Natural killer cell (primary cell): ENCODE measurements at regions of chr20 and their contacts with region 1.

Region 1: GRCh38 chr20:17504898-17505635 is 26.1 kb downstream of the BFSP1 start:
- DNase-seq: peak; percentile 63 to 82
- ATAC-seq: peak; percentile 64 to 83 (median 78)
- H3K4me3 ChIP-seq: peak overlapping the region; percentile 43
- H3K4me3 Mint-ChIP-seq: peak overlapping the region; percentile 90
- H3K27ac ChIP-seq: peak overlapping the region; percentile 74
- H3K27ac Mint-ChIP-seq: peak overlapping the region; percentile 85 to 93
- H3K4me1 ChIP-seq: peaks cover 48% of the 10 kb centered on the region
- H3K4me1 Mint-ChIP-seq: peaks cover 55 to 56% of the 10 kb centered on the region in 2 donors
- H3K27me3 ChIP-seq: no peaks in the 10 kb centered on the region
- H3K27me3 Mint-ChIP-seq: no peaks in the 10 kb centered on the region
- CTCF ChIP-seq: peak; percentile 80

Region 2: GRCh38 chr20:17262786-17263185 is 242.3 kb before region 1 on chr20:
- intact Hi-C with region 1: no loop called
- DNase-seq: no peak
- ATAC-seq: no peak
- H3K4me3 ChIP-seq: no peak overlapping the region
- H3K4me3 Mint-ChIP-seq: no peak overlapping the region
- H3K27ac ChIP-seq: no peak overlapping the region
- H3K27ac Mint-ChIP-seq: no peak overlapping the region
- H3K4me1 ChIP-seq: no peaks in the 10 kb centered on the region
- H3K4me1 Mint-ChIP-seq: no peaks in the 10 kb centered on the region
- H3K27me3 ChIP-seq: no peaks in the 10 kb centered on the region
- H3K27me3 Mint-ChIP-seq: peaks cover 0 to 3% of the 10 kb centered on the region in 2 donors
- CTCF ChIP-seq: no peak

Region 3: DNA sequence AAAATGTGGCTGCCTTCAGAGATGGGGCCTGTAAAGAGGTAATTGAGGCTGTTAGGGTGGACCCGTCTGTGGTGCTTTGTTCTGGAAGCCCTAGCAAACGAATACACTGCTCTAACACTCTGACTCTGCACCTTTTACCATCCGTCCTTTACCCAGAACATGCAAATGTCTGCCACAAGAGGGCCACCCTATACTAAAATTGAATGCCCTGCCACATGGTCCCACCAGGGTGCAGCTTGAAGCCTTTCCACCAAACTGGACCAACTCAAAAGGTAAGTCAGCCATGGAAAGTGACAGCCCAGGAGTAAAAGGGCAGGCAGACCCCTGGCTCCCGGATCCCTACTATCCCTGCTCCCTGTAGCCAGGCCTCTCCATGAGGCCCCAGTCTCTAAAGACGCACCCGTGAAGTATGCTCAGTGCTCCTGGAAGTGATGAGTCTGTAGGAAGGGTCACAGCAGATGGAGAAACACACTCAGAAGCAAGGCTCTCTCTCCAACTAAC is 31.9 kb after region 1 on chr20:
- intact Hi-C with region 1: loop called (anchors 1 kb)
- DNase-seq: peak; percentile 52 to 85
- ATAC-seq: peak; percentile 95 to 100 (median 100)
- H3K4me3 ChIP-seq: no peak overlapping the region
- H3K4me3 Mint-ChIP-seq: no peak overlapping the region
- H3K27ac ChIP-seq: no peak overlapping the region
- H3K27ac Mint-ChIP-seq: peak overlapping the region in 1 of 2 donors; percentile 53
- H3K4me1 ChIP-seq: peaks cover 14% of the 10 kb centered on the region
- H3K4me1 Mint-ChIP-seq: peaks cover 16 to 21% of the 10 kb centered on the region in 2 donors
- H3K27me3 ChIP-seq: peaks cover under 1% of the 10 kb centered on the region
- H3K27me3 Mint-ChIP-seq: peaks cover 12 to 29% of the 10 kb centered on the region in 2 donors
- CTCF ChIP-seq: peak; percentile 87

Region 4: DNA sequence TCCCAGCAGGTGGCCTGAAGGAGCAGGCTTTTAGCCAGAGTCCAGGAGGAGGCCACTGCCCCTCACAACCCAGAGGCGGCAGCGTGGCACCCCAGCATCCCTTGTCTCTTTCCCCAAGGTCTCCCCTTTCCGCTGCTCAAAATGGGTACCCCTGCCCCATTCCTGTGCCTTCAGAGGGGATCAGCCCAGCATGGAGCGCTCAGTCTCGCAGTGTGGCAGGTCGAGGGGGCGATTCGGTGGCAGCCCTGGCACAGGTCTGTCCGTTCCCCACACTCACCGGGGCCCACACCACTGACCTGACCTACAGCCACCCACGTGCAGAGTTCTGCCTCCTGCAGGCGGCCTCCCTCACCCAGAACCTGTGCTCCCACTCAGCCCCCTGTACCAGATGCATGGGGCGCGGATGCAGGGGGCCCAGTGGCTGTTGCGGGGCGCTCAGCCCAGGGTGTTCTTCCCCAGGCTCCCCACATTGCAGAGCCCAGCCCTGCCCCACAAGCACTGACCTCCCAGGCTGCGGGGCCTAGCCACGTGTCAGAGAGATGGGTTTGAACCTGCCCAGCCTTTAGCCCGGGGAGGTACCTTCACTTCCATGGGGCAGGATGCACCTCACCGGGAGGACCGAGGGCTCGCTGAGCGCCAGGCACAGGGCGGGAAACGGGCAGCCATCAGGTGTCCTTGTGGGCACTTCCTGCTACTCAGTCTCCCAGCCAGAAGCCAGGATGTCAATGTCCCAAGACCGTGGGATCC is 106.6 kb after region 1 on chr20:
- intact Hi-C with region 1: loop called (anchors 1 kb)
- DNase-seq: no peak
- ATAC-seq: peak in 1 of 3 donors; percentile 2
- H3K4me3 ChIP-seq: no peak overlapping the region
- H3K4me3 Mint-ChIP-seq: peak overlapping the region; percentile 13
- H3K27ac ChIP-seq: peak overlapping the region; percentile 94
- H3K27ac Mint-ChIP-seq: peak overlapping the region; percentile 98
- H3K4me1 ChIP-seq: peaks cover 67% of the 10 kb centered on the region
- H3K4me1 Mint-ChIP-seq: peaks cover 41 to 59% of the 10 kb centered on the region in 2 donors
- H3K27me3 ChIP-seq: no peaks in the 10 kb centered on the region
- H3K27me3 Mint-ChIP-seq: no peaks in the 10 kb centered on the region
- CTCF ChIP-seq: peak; percentile 1

Region 5: GRCh38 chr20:17662333-17663039 is 157.4 kb after region 1 on chr20:
- intact Hi-C with region 1: no loop called
- DNase-seq: no peak
- ATAC-seq: peak; percentile 56 to 67 (median 60)
- H3K4me3 ChIP-seq: no peak overlapping the region
- H3K4me3 Mint-ChIP-seq: peak overlapping the region; percentile 62
- H3K27ac ChIP-seq: peak overlapping the region; percentile 24
- H3K27ac Mint-ChIP-seq: peak overlapping the region; percentile 74 to 85
- H3K4me1 ChIP-seq: peaks cover 44% of the 10 kb centered on the region
- H3K4me1 Mint-ChIP-seq: peaks cover 73 to 85% of the 10 kb centered on the region in 2 donors
- H3K27me3 ChIP-seq: no peaks in the 10 kb centered on the region
- H3K27me3 Mint-ChIP-seq: no peaks in the 10 kb centered on the region
- CTCF ChIP-seq: no peak

Region 6: GRCh38 chr20:17898548-17898994 is 393.5 kb after region 1 on chr20:
- intact Hi-C with region 1: loop called (anchors 1 kb)
- DNase-seq: peak; percentile 64 to 83
- ATAC-seq: peak; percentile 82 to 93 (median 90)
- H3K4me3 ChIP-seq: no peak overlapping the region
- H3K4me3 Mint-ChIP-seq: no peak overlapping the region
- H3K27ac ChIP-seq: no peak overlapping the region
- H3K27ac Mint-ChIP-seq: no peak overlapping the region
- H3K4me1 ChIP-seq: peaks cover 19% of the 10 kb centered on the region
- H3K4me1 Mint-ChIP-seq: peaks cover 15 to 16% of the 10 kb centered on the region in 2 donors
- H3K27me3 ChIP-seq: peaks cover 3% of the 10 kb centered on the region
- H3K27me3 Mint-ChIP-seq: peaks cover 21 to 31% of the 10 kb centered on the region in 2 donors
- CTCF ChIP-seq: peak; percentile 97

Region 7: DNA sequence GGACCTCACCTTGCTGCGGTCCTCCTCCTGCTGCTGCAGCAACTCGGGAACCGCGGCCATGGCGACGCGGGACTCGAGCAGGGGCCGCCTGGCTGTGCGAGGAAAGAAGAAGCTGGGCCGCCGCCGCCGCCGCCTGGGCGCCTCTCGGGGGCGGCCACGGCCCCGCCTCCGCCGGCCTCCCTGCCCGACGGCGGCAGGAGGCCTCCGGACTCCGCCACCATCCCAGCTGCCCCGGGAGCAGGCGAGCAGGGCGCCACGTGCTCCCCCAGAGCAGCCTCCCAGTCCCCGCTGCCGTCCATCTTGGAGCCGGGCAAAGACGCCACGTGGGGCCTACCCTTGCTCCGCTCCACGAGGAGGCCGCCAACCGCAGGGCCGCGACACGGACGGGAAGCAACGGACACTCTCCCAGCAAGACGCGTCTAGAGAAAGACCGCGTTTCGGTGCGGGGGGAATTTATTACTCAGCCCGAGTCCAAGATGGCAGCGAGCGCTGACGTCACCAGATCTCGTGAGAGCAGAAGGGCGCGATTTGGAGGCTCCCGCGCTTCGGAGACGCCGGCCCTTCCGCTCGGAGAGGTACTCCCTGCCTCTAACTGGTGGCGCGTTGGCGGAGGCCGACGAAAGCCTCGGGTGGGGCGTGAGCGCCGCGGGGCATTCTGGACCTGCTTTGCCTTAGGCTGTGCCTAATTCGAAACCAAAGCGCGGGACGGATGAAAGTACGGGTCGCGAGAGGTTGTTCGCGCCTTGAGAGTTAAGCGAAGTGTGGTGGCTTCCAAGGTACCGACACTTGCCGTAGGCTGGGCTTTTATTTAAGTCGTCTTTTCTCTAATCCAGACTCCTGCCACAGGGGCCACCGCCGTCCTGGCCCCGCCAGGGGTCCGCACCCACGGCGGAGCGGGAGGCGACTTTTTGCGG is 463.6 kb after region 1 on chr20 and contains the starts of genes MGME1 and SNX5:
- intact Hi-C with region 1: loop called (anchors 10 kb)
- DNase-seq: peak; percentile 99
- ATAC-seq: peak; percentile 87 to 97 (median 91)
- H3K4me3 ChIP-seq: peak within 1 kb of the TSS; percentile 88
- H3K4me3 Mint-ChIP-seq: peak within 1 kb of the TSS; percentile 98
- H3K27ac ChIP-seq: peak within 1 kb of the TSS; percentile 99
- H3K27ac Mint-ChIP-seq: peak within 1 kb of the TSS; percentile 95 to 98
- H3K4me1 ChIP-seq: peaks cover 40% of the 10 kb centered on the region
- H3K4me1 Mint-ChIP-seq: peaks cover 80 to 83% of the 10 kb centered on the region in 2 donors
- H3K27me3 ChIP-seq: no peaks in the 10 kb centered on the region
- H3K27me3 Mint-ChIP-seq: no peaks in the 10 kb centered on the region
- CTCF ChIP-seq: no peak
- total RNA-seq, gene MGME1: 10.3 to 25.1 (median 13.0) TPM
- total RNA-seq, gene SNX5: 62.3 to 85.4 (median 72.1) TPM

Region 8: DNA sequence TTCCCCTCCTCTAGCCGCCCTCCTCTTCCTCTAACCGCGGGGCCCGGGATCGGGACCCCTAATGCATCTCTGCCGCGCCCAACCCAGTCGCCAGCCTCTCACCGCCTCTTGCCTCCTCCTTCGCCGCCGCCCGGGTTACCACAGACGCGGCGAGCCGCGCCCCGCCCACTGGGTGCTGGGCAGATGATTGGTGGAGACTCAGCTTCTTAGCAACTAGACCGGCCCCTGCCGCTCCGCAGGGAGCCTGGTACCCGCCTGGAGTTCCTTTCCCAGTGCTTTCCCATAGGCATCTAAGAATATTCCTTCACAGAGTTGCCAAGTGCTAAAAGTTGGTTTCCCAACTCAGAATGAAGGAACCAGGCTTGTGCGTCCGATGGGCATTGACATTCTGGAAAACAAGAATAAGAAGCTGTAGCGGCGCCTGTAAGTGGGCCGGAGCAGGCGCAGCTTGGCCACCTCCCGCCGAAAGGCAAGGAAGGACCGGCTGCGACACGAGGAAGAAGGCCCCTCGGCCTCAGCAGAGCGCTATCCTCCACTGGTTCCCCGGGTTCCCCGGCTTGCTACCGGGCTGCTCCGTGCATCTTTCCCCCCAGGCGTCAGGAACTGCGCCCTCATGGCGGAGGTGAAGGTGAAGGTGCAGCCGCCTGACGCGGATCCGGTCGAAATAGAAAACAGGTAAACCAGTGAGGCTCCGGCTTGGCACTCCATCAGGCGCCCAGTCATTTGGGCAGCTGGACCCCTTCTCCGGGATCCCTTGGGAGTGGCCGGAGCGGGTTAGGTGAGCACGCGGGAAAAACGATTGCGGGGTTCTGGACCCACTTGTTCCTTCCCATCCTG is 962.0 kb after region 1 on chr20 and contains the starts of genes DZANK1 and POLR3F:
- intact Hi-C with region 1: loop called (anchors 5 kb)
- DNase-seq: peak; percentile 87 to 94
- ATAC-seq: peak; percentile 92 to 95 (median 94)
- H3K4me3 ChIP-seq: peak within 1 kb of the TSS; percentile 70
- H3K4me3 Mint-ChIP-seq: peak within 1 kb of the TSS; percentile 97
- H3K27ac ChIP-seq: peak within 1 kb of the TSS; percentile 84
- H3K27ac Mint-ChIP-seq: peak within 1 kb of the TSS; percentile 95 to 97
- H3K4me1 ChIP-seq: peaks cover 16% of the 10 kb centered on the region
- H3K4me1 Mint-ChIP-seq: peaks cover 21 to 28% of the 10 kb centered on the region in 2 donors
- H3K27me3 ChIP-seq: no peaks in the 10 kb centered on the region
- H3K27me3 Mint-ChIP-seq: no peaks in the 10 kb centered on the region
- CTCF ChIP-seq: no peak
- total RNA-seq, gene DZANK1: 2.7 to 5.7 (median 3.7) TPM
- total RNA-seq, gene POLR3F: 8.5 to 10.6 (median 8.8) TPM